HepG2 (cell line): ENCODE measurements at regions of chr19 and their contacts with region 1.

Region 1: DNA sequence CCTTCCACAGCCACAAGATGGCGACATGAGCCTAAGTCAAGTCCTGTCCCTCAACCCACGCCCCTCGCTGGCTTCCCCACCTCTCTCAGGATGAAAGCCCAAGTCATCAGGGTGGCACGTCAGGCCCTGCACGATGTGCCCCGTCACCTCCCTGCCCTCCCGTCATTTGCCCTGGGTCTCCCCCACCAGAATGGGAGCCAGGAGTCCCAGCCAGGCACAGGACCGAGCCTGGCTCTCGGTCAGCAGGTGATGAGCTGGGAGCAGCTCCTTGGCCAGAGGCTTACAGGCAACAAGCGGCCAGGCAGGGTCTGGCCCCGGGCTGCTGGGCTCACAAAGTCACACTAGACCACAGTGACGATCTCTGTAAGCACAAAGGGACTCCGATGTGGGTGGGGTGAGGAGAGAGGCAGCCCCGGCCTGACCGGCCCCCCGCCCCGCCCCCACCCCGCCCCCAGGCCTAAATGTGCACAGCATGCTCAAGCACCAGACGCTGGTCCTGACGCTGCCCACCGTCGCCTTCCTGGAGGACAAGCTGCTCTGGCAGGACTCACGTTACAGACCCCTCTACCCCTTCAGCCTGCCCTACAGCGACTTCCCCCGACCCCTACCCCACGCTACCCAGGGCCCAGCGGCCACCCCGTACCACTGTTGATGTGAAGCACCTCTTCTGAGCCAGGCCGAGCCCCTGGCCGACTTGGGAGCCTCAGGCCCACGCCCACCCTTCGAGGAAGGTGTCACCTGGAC is 7.3 kb downstream of the MRPL4 start:
- DNase-seq: peak; percentile 88
- ATAC-seq: peak; percentile 71
- H3K4me3 ChIP-seq: no peak overlapping the region
- H3K27ac ChIP-seq: no peak overlapping the region
- H3K4me1 ChIP-seq: peaks cover 51% of the 10 kb centered on the region
- H3K27me3 ChIP-seq: no peaks in the 10 kb centered on the region
- CTCF ChIP-seq: peak; percentile 82
- EP300 ChIP-seq: no peak
- POLR2A ChIP-seq: no peak
- RAD21 ChIP-seq: peak; percentile 63

Region 2: GRCh38 chr19:10388957-10389356 is 129.6 kb after region 1 on chr19:
- CTCF ChIA-PET with region 1: interaction called, 24 read pairs
- POLR2A ChIA-PET with region 1: interaction called, 14 read pairs
- in situ Hi-C with region 1: no loop called
- intact Hi-C with region 1: loop called (anchors 1 kb)
- DNase-seq: peak; percentile 80
- ATAC-seq: peak; percentile 63
- H3K4me3 ChIP-seq: no peak overlapping the region
- H3K27ac ChIP-seq: no peak overlapping the region
- H3K4me1 ChIP-seq: peaks cover 20% of the 10 kb centered on the region
- H3K27me3 ChIP-seq: no peaks in the 10 kb centered on the region
- CTCF ChIP-seq: peak; percentile 90
- EP300 ChIP-seq: no peak
- POLR2A ChIP-seq: 0 out of 4 replicates have a peak, but pooled peaks of 1 of the 2 experiments have one; percentile 23
- RAD21 ChIP-seq: peak; percentile 70